ENCODE measurements at regions of chr3 and their contacts with region 1.

Region 1: GRCh38 chr3:149771652-149772271 is 19.5 kb upstream of the COMMD2 start:
- DNase-seq: peak; percentile 62
- H3K4me3 ChIP-seq: no peak overlapping the region
- H3K27ac ChIP-seq: no peak overlapping the region
- H3K4me1 ChIP-seq: no peaks in the 10 kb centered on the region
- H3K27me3 ChIP-seq: no peaks in the 10 kb centered on the region
- CTCF ChIP-seq: peak; percentile 86
- EP300 ChIP-seq: no peak
- RAD21 ChIP-seq: peak; percentile 66

Region 2: DNA sequence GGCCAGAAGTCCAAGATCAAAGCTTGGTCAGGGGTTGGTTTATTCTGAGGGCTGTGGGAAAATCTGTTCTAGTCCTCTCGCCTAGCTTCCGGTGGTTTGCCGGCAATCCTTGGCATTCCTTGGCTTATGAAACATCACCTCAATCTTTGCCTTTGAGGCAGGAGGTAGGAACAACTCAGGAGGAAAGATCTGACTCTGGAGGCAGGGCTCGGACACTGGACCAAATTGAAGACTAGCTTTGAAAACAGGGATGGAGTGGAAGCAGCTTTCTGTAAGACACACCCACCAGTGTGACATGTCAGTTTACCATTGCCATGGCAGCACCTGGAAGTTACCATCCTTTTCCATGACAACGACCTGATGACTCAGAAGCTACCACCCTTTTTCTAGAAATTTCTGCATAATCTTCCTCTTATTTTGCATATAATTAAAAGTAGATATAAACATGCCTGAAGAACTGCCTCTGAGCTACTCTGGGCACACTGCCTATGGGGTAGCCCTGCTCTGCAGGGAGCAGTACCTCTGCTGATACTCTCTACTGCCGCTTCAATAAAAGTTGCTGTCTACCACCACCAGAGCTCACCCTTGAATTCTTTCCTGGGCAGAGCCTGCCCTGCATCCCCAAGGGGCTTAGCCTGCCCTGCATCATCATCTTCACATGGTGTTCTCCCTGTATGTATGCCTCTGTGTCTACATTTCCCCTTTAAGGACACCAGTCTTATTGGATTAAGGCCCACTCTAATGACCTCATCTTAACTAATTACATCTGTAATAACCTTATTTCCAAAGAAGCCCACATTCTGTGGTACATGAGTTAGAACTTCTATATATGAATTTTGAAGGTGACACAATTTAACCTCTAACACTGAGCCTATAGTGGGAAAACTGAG is 335.5 kb before region 1 on chr3:
- CTCF ChIA-PET with region 1: no interaction called
- POLR2A ChIA-PET with region 1: no interaction called
- DNase-seq: no peak
- H3K4me3 ChIP-seq: no peak overlapping the region
- H3K27ac ChIP-seq: no peak overlapping the region
- H3K4me1 ChIP-seq: no peaks in the 10 kb centered on the region
- H3K27me3 ChIP-seq: no peaks in the 10 kb centered on the region
- CTCF ChIP-seq: no peak
- EP300 ChIP-seq: no peak
- RAD21 ChIP-seq: no peak

Region 3: GRCh38 chr3:149512209-149512782 is 259.5 kb before region 1 on chr3:
- CTCF ChIA-PET with region 1: interaction called, 20 read pairs
- POLR2A ChIA-PET with region 1: no interaction called
- DNase-seq: peak; percentile 78
- H3K4me3 ChIP-seq: peak overlapping the region; percentile 21 to 29; a peak in 2 of 4 replicates
- H3K27ac ChIP-seq: no peak overlapping the region
- H3K4me1 ChIP-seq: peaks cover 0 to 12% of the 10 kb centered on the region in 2 experiments; a peak in 1 of 4 replicates
- H3K27me3 ChIP-seq: no peaks in the 10 kb centered on the region
- CTCF ChIP-seq: peak; percentile 90
- EP300 ChIP-seq: no peak
- RAD21 ChIP-seq: peak; percentile 93

Region 4: GRCh38 chr3:149752051-149752787 is 19.5 kb before region 1 on chr3 and contains the start of gene COMMD2:
- CTCF ChIA-PET with region 1: interaction called, 11 read pairs
- POLR2A ChIA-PET with region 1: no interaction called
- DNase-seq: peak; percentile 82
- H3K4me3 ChIP-seq: peak within 1 kb of the TSS; percentile 96
- H3K27ac ChIP-seq: peak within 1 kb of the TSS; percentile 59 to 74; a peak in 3 of 4 replicates
- H3K4me1 ChIP-seq: peaks cover 0 to 5% of the 10 kb centered on the region in 2 experiments; a peak in 3 of 4 replicates
- H3K27me3 ChIP-seq: no peaks in the 10 kb centered on the region
- CTCF ChIP-seq: peak; percentile 53
- EP300 ChIP-seq: peak in 1 of 2 experiments; percentile 22; a peak in 1 of 4 replicates
- RAD21 ChIP-seq: peak; percentile 41
- polyA plus RNA-seq, gene COMMD2: 20.9 and 21.3 TPM in 2 replicates

Region 5: GRCh38 chr3:149783576-149783975 is 11.8 kb after region 1 on chr3:
- CTCF ChIA-PET with region 1: interaction called, 16 read pairs
- POLR2A ChIA-PET with region 1: no interaction called
- DNase-seq: no peak
- H3K4me3 ChIP-seq: no peak overlapping the region
- H3K27ac ChIP-seq: peak overlapping the region; percentile 46 to 59; a peak in 3 of 4 replicates
- H3K4me1 ChIP-seq: peaks cover 0 to 4% of the 10 kb centered on the region in 2 experiments; a peak in 1 of 4 replicates
- H3K27me3 ChIP-seq: no peaks in the 10 kb centered on the region
- CTCF ChIP-seq: no peak
- EP300 ChIP-seq: no peak
- RAD21 ChIP-seq: no peak